Tibial artery (tissue), 4 donors: ENCODE measurements at regions of chr5 and their contacts with region 1.

Region 1: DNA sequence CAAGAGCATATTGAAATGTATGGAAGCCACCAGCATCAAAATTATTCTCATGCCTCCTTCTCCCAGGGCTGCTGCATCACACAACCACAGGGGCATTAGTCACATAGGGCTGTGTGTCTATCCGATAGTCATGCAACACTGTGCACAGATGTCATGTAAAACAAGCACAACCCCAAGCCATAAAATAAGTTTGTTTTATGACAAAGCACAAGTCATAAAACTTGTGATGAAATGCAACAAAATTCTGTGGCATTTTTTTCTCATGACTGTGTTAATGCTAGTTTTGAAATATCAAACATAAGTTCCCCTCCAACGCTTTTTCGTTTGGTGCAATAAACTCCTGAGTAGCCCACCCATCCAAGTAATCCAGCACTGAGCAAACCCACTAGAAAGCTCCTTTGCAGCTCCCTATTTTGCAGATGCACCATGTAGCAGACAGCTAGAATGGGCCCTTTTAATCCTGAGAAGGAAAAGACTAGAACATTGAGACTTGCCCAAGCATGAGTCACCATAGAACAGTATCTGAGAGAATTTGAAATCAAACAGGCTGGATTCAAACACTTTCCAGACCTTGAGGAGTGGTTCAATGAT is 93.3 kb upstream of the ZNF366 start:
- DNase-seq: no peak
- H3K4me3 ChIP-seq: no peak overlapping the region
- H3K27ac ChIP-seq: peak overlapping the region; percentile 61 to 67
- H3K4me1 ChIP-seq: peaks cover 0 to 52% (median 22%) of the 10 kb centered on the region in 4 donors
- H3K27me3 ChIP-seq: no peaks in the 10 kb centered on the region
- CTCF ChIP-seq: no peak

Region 2: DNA sequence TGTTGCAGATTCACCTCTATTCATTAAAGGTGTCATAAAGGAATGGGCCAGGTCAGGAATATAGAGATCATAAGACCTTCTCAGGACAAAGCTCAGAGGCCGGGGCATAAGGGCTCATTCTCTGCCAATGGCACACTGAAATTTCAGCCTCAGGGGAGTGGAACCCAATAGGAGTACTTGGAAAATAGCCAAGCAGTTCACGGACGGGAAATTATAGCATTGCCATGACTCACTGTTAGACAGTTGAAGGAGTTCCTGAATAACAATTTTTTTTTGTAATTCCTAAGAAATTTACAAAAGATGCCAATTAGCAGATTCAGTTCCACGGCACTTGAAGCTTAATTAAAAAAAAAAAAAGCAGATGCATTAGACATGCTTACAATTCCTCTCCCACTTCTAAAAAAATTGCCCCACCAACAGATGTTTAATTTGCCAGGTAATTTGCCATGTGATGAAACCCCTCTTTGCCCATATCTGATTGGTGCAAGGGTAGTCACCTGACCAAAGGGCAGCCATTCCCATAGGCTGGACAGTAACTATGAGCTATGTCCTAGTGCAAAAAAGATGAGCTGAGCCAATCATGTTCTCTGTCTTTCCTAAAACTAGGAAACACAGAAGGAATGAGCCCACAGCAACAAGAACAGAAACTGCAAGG is 221.7 kb before region 1 on chr5:
- intact Hi-C with region 1: loop called (anchors 10 kb)
- DNase-seq: peak; percentile 66 to 78
- H3K4me3 ChIP-seq: no peak overlapping the region
- H3K27ac ChIP-seq: peak overlapping the region; percentile 57 to 62
- H3K4me1 ChIP-seq: peaks cover 0 to 48% (median 31%) of the 10 kb centered on the region in 4 donors
- H3K27me3 ChIP-seq: no peaks in the 10 kb centered on the region
- CTCF ChIP-seq: no peak

Region 3: GRCh38 chr5:72816311-72817145 is 216.0 kb after region 1 on chr5 and contains the start of gene TNPO1:
- intact Hi-C with region 1: no loop called
- DNase-seq: peak; percentile 93 to 96
- H3K4me3 ChIP-seq: peak within 1 kb of the TSS; percentile 68 to 86
- H3K27ac ChIP-seq: peak within 1 kb of the TSS; percentile 96 to 99
- H3K4me1 ChIP-seq: peaks cover 0 to 26% (median 8%) of the 10 kb centered on the region in 4 donors
- H3K27me3 ChIP-seq: no peaks in the 10 kb centered on the region
- CTCF ChIP-seq: no peak

Region 4: DNA sequence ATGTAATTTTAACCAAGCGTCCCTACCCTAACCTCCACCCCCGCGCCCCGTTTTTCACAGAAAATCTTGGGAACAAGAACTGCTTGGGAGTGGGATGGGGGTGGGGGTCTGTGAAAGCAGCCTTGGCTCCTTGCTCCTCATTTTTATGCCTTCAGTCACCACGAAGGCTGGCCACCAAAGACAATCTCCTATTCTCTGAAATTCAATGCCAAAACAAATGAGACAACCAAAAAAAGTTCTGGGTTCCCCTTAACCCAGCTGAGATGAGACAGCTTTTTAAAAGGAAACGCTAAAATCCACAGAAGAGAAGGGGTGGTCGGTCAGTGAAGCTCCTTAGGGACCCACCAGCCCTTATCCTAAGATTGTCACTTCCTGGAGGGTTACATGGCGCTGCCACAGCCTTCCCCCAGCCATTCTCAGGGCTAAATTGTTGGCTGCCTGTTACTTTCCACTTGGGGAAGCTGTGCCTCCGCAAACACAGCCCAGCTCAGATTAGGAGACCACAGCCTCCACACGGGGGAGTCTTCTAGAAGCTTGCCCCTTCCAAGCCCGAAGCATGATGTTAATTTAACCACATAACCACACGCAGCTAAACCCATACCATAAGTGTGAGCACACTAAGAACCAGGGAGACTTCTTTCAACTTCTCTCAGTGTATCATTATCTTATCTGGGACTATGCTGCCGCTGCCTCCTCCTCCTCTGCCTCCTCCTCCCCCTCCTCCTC is 711.8 kb after region 1 on chr5:
- intact Hi-C with region 1: no loop called
- DNase-seq: peak in 1 of 2 donors; percentile 45
- H3K4me3 ChIP-seq: no peak overlapping the region
- H3K27ac ChIP-seq: peak overlapping the region in 1 of 2 donors; percentile 36
- H3K4me1 ChIP-seq: peaks cover 0 to 17% (median 8%) of the 10 kb centered on the region in 4 donors
- H3K27me3 ChIP-seq: peaks cover 0 to 51% of the 10 kb centered on the region in 2 donors
- CTCF ChIP-seq: no peak